Right ventricle myocardium superior (tissue), 1 donor: ENCODE measurements at regions of chr3 and their contacts with region 1.

Region 1: GRCh38 chr3:65672871-65673815 is 365.6 kb downstream of the MAGI1 start:
- DNase-seq: peak; percentile 67
- ATAC-seq: peak; percentile 69

Region 2: GRCh38 chr3:65439641-65440284 is 233.4 kb before region 1 on chr3:
- intact Hi-C with region 1: loop called (anchors 5 kb)
- DNase-seq: peak; percentile 56
- ATAC-seq: peak; percentile 90

Region 3: GRCh38 chr3:65548848-65549625 is 124.1 kb before region 1 on chr3:
- intact Hi-C with region 1: loop called (anchors 10 kb)
- DNase-seq: peak; percentile 48
- ATAC-seq: peak; percentile 86

Region 4: DNA sequence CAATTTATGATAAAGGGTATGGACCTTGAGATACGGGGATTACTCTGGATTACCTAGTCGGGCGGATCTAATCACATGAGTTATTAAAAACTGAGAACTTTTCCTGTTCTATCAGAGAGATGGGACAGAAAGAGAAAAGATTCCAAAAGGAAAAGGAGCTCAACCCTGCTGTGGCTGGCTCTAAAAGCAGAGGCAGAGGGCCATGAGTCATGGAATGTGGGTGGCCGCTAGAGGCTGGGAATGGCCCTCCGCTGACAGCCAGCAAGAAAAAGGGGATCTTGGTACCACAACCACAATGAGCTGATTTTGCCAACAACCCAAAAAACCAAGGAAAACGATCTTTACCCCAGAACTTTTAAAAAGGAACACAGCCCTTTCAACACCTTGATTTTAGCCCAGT is 155.6 kb after region 1 on chr3:
- intact Hi-C with region 1: no loop called
- DNase-seq: no peak
- ATAC-seq: no peak

Region 5: DNA sequence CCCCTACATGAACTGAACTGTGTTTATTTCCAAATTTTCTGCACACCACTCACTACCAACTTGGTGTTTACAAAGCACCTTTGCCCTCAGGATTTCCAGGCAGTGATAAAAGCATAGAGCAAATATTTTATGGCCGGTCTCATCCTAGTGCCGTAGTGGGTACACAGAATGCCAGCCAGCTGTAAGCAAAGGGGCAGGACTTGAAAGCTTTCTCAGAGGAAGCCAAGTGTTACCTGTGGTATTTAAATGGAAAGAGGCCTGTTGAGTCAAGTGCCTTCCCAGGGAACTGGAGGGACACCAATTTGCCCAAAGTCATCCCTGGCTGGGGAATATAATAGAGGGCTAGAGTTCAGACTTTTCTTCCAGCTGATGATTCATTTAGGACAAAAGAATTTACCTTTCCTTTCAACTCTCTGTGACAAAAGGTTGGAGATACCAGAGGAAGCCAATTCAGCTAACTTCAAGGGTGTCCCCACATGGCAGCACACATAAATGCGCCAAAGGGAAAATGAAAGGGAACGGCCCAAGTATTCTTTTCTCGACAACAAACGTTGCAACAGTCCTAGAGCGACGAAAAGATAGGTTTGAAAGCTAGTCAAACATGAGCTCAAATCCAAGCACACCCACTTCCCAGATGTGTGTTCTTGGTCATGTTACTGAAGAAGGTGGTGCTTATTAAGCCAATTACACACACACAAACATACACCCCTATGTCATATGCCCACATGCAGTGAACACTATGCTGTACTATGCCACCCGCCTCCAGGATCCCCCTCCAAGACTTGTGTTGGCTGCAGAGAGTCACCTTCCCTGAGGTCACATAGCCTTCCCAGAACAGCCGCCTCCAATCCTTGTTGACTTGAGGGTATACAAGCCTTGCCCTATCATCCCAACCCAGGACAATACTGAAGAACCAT is 337.9 kb after region 1 on chr3:
- intact Hi-C with region 1: no loop called
- DNase-seq: no peak
- ATAC-seq: peak; percentile 41